GM12878 (cell line): ENCODE measurements at regions of chr11 and their contacts with region 1.

Region 1: DNA sequence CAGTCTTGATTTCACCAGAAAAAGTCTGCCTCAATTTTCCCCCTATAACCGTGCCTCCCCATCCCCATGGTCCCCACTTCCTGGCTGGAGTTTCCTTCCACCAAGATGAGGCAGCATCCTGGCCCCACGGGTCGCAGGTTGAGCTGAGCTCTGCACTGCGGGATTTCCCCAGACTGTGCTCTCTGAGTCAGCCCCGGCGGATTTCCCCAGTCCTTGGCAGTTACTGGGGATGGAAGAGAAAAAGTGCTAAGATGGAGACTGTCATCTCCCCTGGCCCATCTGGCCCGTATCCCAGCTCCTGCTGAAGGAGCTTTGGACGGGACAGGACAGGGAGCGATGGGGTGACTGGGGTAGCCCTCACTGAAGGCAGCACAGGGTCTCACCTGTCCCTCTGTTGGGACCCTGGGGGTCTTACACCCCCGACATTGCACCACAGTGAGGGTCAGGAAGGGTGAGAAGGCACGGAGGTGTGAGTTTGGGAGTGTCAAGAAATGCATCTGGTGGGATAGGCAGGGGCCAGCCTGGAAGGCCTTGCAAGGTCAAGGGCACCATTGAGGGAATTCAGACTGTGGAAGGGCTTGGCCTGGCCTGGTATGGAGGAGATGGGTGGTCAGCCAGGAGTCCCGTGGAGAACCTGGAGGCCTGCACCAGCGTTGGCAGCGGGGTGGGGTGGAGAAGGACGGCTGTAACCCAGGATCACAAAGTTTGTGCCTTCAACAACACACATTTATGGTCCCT is 36.5 kb downstream of the NADSYN1 start:
- DNase-seq: peak; percentile 27
- ATAC-seq: peak; percentile 99
- H3K4me3 ChIP-seq: no peak overlapping the region
- H3K27ac ChIP-seq: peak overlapping the region; percentile 74
- H3K4me1 ChIP-seq: peaks cover 11% of the 10 kb centered on the region
- H3K27me3 ChIP-seq: no peaks in the 10 kb centered on the region
- CTCF ChIP-seq: no peak
- EP300 ChIP-seq: no peak
- POLR2A ChIP-seq: peak; percentile 36; the same call in 1 of the 2 replicates
- RAD21 ChIP-seq: no peak; the same call in 1 of the 2 replicates

Region 2: GRCh38 chr11:71543866-71544265 is 54.4 kb after region 1 on chr11:
- CTCF ChIA-PET with region 1: no interaction called
- POLR2A ChIA-PET with region 1: interaction called, 3 read pairs
- RAD21 ChIA-PET with region 1: no interaction called
- SMC1A ChIA-PET with region 1: no interaction called
- in situ Hi-C with region 1: no loop called
- intact Hi-C with region 1: loop called (anchors 1 kb)
- DNase-seq: no peak
- ATAC-seq: no peak
- H3K4me3 ChIP-seq: no peak overlapping the region
- H3K27ac ChIP-seq: 0 out of 2 replicates have a peak overlapping the region, but pooled peaks have one; percentile 18
- H3K4me1 ChIP-seq: peaks cover 41% of the 10 kb centered on the region
- H3K27me3 ChIP-seq: no peaks in the 10 kb centered on the region
- CTCF ChIP-seq: no peak
- EP300 ChIP-seq: no peak
- POLR2A ChIP-seq: no peak
- RAD21 ChIP-seq: no peak